ENCODE measurements at regions of chr7 and their contacts with region 1.

Region 1: GRCh38 chr7:100132697-100133151 is 6.0 kb downstream of the MBLAC1 start:
- DNase-seq: peak; percentile 31 to 80 (median 55)
- ATAC-seq: peak; percentile 70 to 76 (median 74)
- H3K4me3 ChIP-seq: no peak overlapping the region
- H3K4me3 Mint-ChIP-seq: no peak overlapping the region
- H3K27ac ChIP-seq: no peak overlapping the region
- H3K27ac Mint-ChIP-seq: no peak overlapping the region
- H3K4me1 ChIP-seq: peaks cover 9 to 29% of the 10 kb centered on the region in 2 experiments
- H3K4me1 Mint-ChIP-seq: peaks cover 17 to 26% (median 20%) of the 10 kb centered on the region in 3 donors
- H3K27me3 ChIP-seq: no peaks in the 10 kb centered on the region
- H3K27me3 Mint-ChIP-seq: no peaks in the 10 kb centered on the region

Region 2: GRCh38 chr7:100081535-100082102 is 51.1 kb before region 1 on chr7 and contains the start of gene ZNF3:
- CTCF ChIA-PET with region 1: interaction called, 10 to 13 read pairs
- POLR2A ChIA-PET with region 1: interaction called in 1 of 2 experiments, 3 read pairs
- DNase-seq: peak; percentile 93 to 99 (median 97)
- ATAC-seq: peak; percentile 89 to 97 (median 96)
- H3K4me3 ChIP-seq: peak within 1 kb of the TSS; percentile 81 to 83
- H3K4me3 Mint-ChIP-seq: peak within 1 kb of the TSS; percentile 79 to 89 (median 88)
- H3K27ac ChIP-seq: peak within 1 kb of the TSS; percentile 70
- H3K27ac Mint-ChIP-seq: peak within 1 kb of the TSS; percentile 88 to 89
- H3K4me1 ChIP-seq: peaks cover 10 to 28% of the 10 kb centered on the region in 2 experiments
- H3K4me1 Mint-ChIP-seq: peaks cover 31 to 43% (median 37%) of the 10 kb centered on the region in 3 donors
- H3K27me3 ChIP-seq: peaks cover 0 to 5% of the 10 kb centered on the region in 2 experiments
- H3K27me3 Mint-ChIP-seq: no peaks in the 10 kb centered on the region
- total RNA-seq, gene ZNF3: 31.7 to 39.2 (median 35.4) TPM

Region 3: DNA sequence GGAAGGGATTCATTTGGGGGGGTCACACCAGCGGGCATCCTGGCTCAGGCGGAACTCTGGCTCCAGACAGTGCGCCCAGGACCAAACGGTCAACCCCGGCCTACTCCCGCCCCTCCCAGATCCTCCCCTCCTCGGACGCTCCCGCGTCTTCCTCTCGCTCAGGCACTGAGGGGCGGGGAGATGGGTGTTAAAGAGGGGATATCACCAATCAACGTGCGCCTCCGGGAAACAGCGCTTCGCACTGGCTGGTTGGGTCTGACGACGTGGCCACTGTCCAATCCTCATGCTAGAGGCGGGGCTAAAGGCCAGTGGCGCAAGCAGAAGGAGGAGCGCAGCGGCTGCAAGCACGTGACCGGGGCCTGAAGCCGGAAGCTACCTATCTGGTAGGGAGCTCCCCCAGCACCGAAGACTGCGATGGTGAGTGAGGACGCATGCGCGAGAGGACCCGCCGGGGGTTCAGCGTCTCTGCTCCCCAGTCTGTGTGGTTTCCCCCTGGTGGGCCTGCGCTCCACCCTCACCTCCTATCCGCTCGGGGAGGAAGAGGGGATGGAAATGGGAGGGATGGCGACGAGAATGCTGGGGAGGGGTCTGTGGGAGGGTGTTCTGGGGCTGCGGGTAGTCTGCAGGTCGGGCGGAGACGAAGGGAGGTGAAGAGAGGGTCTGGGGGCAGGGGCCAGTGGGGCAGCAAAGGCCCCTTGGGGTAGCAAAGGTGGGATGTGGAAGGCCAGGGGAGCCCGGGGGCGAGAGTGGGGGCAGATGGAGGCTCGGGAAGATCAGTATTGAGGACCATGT is 16.0 kb after region 1 on chr7 and contains the start of gene LAMTOR4:
- CTCF ChIA-PET with region 1: interaction called, 3 to 13 read pairs
- POLR2A ChIA-PET with region 1: interaction called in 1 of 2 experiments, 3 read pairs
- DNase-seq: peak; percentile 86 to 99 (median 98)
- ATAC-seq: peak; percentile 93 to 98 (median 95)
- H3K4me3 ChIP-seq: peak within 1 kb of the TSS; percentile 83 to 99
- H3K4me3 Mint-ChIP-seq: peak within 1 kb of the TSS; percentile 91 to 99 (median 98)
- H3K27ac ChIP-seq: peak within 1 kb of the TSS; percentile 95
- H3K27ac Mint-ChIP-seq: peak within 1 kb of the TSS; percentile 99
- H3K4me1 ChIP-seq: peaks cover 9 to 36% of the 10 kb centered on the region in 2 experiments
- H3K4me1 Mint-ChIP-seq: peaks cover 42 to 45% (median 43%) of the 10 kb centered on the region in 3 donors
- H3K27me3 ChIP-seq: no peaks in the 10 kb centered on the region
- H3K27me3 Mint-ChIP-seq: no peaks in the 10 kb centered on the region
- total RNA-seq, gene LAMTOR4: 140 to 216 (median 187) TPM

Region 4: GRCh38 chr7:100163006-100163531 is 30.3 kb after region 1 on chr7:
- CTCF ChIA-PET with region 1: interaction called, 3 to 7 read pairs
- POLR2A ChIA-PET with region 1: interaction called in 1 of 2 experiments, 10 read pairs
- DNase-seq: peak in 2 of 35 experiments; percentile 36 to 47
- ATAC-seq: peak; percentile 21 to 40 (median 24)
- H3K4me3 ChIP-seq: peak overlapping the region in 1 of 2 donors; percentile 25
- H3K4me3 Mint-ChIP-seq: peak overlapping the region; percentile 58 to 69 (median 63)
- H3K27ac ChIP-seq: peak overlapping the region; percentile 67
- H3K27ac Mint-ChIP-seq: peak overlapping the region; percentile 98
- H3K4me1 ChIP-seq: peaks cover 51 to 73% of the 10 kb centered on the region in 2 experiments
- H3K4me1 Mint-ChIP-seq: peaks cover 50 to 78% (median 71%) of the 10 kb centered on the region in 3 donors
- H3K27me3 ChIP-seq: peaks cover 0 to 17% of the 10 kb centered on the region in 2 experiments
- H3K27me3 Mint-ChIP-seq: peaks cover 0 to 10% of the 10 kb centered on the region in 2 donors

Region 5: GRCh38 chr7:100208911-100209408 is 76.2 kb after region 1 on chr7:
- CTCF ChIA-PET with region 1: interaction called, 4 to 27 read pairs
- POLR2A ChIA-PET with region 1: no interaction called
- DNase-seq: peak in 4 of 35 experiments; percentile 14 to 39 (median 23)
- ATAC-seq: peak; percentile 32 to 51 (median 42)
- H3K4me3 ChIP-seq: no peak overlapping the region
- H3K4me3 Mint-ChIP-seq: peak overlapping the region; percentile 28 to 71 (median 50)
- H3K27ac ChIP-seq: peak overlapping the region; percentile 11
- H3K27ac Mint-ChIP-seq: peak overlapping the region; percentile 57 to 87
- H3K4me1 ChIP-seq: peaks cover 22 to 40% of the 10 kb centered on the region in 2 experiments
- H3K4me1 Mint-ChIP-seq: peaks cover 43 to 50% (median 47%) of the 10 kb centered on the region in 3 donors
- H3K27me3 ChIP-seq: no peaks in the 10 kb centered on the region
- H3K27me3 Mint-ChIP-seq: no peaks in the 10 kb centered on the region

Region 6: DNA sequence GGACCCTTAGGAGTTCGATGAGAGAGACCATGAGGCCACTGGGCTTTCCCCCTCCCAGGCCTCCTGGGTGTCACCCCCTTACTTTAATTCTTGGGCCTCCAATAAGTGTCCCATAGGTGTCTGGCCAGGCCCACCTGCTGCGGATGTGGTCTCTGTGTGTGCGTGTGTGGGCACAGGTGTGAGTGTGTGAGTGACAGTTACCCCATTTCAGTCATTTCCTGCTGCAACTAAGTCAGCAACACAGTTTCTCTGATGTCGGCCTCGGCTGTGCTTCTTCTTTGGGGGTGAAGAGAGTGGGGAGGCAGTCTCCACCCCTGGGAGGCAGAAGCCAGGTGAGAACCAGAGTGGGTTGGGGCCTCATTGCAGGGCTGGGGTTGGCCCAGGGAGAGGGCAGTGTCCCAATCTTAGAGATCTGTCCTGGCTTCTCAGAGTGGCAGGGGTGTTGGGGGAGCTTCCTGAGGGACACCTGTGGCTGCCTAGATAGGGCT is 88.6 kb after region 1 on chr7:
- CTCF ChIA-PET with region 1: interaction called, 4 to 12 read pairs
- POLR2A ChIA-PET with region 1: no interaction called
- DNase-seq: peak; percentile 53 to 90 (median 83)
- ATAC-seq: peak; percentile 66 to 76 (median 68)
- H3K4me3 ChIP-seq: peak overlapping the region; percentile 75 to 92
- H3K4me3 Mint-ChIP-seq: peak overlapping the region; percentile 87 to 93 (median 92)
- H3K27ac ChIP-seq: peak overlapping the region; percentile 98
- H3K27ac Mint-ChIP-seq: peak overlapping the region; percentile 98 to 99
- H3K4me1 ChIP-seq: peaks cover 13 to 82% of the 10 kb centered on the region in 2 experiments
- H3K4me1 Mint-ChIP-seq: peaks cover 68 to 79% (median 74%) of the 10 kb centered on the region in 3 donors
- H3K27me3 ChIP-seq: no peaks in the 10 kb centered on the region
- H3K27me3 Mint-ChIP-seq: no peaks in the 10 kb centered on the region

Region 7: GRCh38 chr7:100407285-100408180 is 274.8 kb after region 1 on chr7:
- CTCF ChIA-PET with region 1: interaction called, 5 to 13 read pairs
- POLR2A ChIA-PET with region 1: no interaction called
- DNase-seq: peak in 14 of 35 experiments; percentile 9 to 81 (median 30)
- ATAC-seq: peak; percentile 82 to 88 (median 83)
- H3K4me3 ChIP-seq: no peak overlapping the region
- H3K4me3 Mint-ChIP-seq: no peak overlapping the region
- H3K27ac ChIP-seq: no peak overlapping the region
- H3K27ac Mint-ChIP-seq: no peak overlapping the region
- H3K4me1 ChIP-seq: peaks cover 0 to 4% of the 10 kb centered on the region in 2 experiments
- H3K4me1 Mint-ChIP-seq: peaks cover 0 to 5% (median 2%) of the 10 kb centered on the region in 3 donors
- H3K27me3 ChIP-seq: peaks cover 0 to 3% of the 10 kb centered on the region in 2 experiments
- H3K27me3 Mint-ChIP-seq: no peaks in the 10 kb centered on the region

Region 8: DNA sequence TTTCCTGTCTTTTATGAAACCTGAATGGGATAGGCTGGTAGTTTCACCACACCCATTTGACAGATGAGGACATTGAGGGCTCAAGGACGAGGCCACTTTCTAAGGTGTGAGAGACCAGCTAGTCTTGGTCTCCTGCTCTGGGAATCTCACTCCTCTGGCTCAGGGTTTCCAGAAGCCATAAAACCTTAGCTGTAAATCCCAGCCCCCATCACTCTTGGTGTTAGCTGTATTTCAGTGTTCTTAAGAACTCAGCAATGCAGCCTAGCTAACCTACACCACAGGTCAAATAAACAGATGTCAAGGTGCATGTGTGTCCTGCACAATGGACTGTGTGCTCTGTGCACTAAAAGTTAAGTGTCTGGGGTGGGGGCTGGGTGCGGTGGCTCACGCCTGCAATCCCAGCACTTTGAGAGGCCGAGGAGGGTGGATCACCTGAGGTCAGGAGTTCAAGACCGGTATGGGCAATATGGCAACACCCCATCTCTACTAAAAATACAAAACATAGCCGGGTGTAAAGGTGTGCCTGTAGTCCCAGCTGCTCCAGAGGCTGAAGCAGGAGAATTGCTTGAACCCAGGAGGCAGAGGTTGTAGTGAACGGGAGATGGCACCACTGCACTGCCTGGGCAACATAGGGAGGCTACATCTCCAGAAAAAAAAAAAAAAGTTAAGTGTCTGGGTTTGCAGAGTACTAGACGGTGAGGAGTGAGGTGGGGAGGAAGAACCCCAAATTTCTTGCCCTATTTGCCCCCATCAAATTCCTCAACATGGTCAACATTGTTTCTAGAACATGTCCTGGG is 587.0 kb after region 1 on chr7:
- CTCF ChIA-PET with region 1: no interaction called
- POLR2A ChIA-PET with region 1: no interaction called
- DNase-seq: no peak
- ATAC-seq: no peak
- H3K4me3 ChIP-seq: no peak overlapping the region
- H3K4me3 Mint-ChIP-seq: no peak overlapping the region
- H3K27ac ChIP-seq: no peak overlapping the region
- H3K27ac Mint-ChIP-seq: no peak overlapping the region
- H3K4me1 ChIP-seq: peaks cover 0 to 4% of the 10 kb centered on the region in 2 experiments
- H3K4me1 Mint-ChIP-seq: peaks cover 0 to 2% (median 2%) of the 10 kb centered on the region in 3 donors
- H3K27me3 ChIP-seq: peaks cover 2 to 68% of the 10 kb centered on the region in 2 experiments
- H3K27me3 Mint-ChIP-seq: peaks cover 41 to 43% of the 10 kb centered on the region in 2 donors